ENCODE measurements at regions of chr1 and their contacts with region 1.

Region 1: GRCh38 chr1:27234049-27234882 is at the start of gene WDTC1:
- DNase-seq: peak; percentile 95 to 99 (median 98)
- ATAC-seq: peak; percentile 92
- H3K4me3 ChIP-seq: peak within 1 kb of the TSS; percentile 62
- H3K4me3 Mint-ChIP-seq: peak within 1 kb of the TSS; percentile 100
- H3K27ac ChIP-seq: peak within 1 kb of the TSS; percentile 70 to 73
- H3K27ac Mint-ChIP-seq: peak within 1 kb of the TSS; percentile 99
- H3K4me1 ChIP-seq: peaks cover 29% of the 10 kb centered on the region
- H3K4me1 Mint-ChIP-seq: peaks cover 38% of the 10 kb centered on the region
- H3K27me3 ChIP-seq: no peaks in the 10 kb centered on the region
- H3K27me3 Mint-ChIP-seq: peaks cover 4% of the 10 kb centered on the region
- CTCF ChIP-seq: no peak
- total RNA-seq, gene WDTC1: 17.7 to 18.6 TPM

Region 2: DNA sequence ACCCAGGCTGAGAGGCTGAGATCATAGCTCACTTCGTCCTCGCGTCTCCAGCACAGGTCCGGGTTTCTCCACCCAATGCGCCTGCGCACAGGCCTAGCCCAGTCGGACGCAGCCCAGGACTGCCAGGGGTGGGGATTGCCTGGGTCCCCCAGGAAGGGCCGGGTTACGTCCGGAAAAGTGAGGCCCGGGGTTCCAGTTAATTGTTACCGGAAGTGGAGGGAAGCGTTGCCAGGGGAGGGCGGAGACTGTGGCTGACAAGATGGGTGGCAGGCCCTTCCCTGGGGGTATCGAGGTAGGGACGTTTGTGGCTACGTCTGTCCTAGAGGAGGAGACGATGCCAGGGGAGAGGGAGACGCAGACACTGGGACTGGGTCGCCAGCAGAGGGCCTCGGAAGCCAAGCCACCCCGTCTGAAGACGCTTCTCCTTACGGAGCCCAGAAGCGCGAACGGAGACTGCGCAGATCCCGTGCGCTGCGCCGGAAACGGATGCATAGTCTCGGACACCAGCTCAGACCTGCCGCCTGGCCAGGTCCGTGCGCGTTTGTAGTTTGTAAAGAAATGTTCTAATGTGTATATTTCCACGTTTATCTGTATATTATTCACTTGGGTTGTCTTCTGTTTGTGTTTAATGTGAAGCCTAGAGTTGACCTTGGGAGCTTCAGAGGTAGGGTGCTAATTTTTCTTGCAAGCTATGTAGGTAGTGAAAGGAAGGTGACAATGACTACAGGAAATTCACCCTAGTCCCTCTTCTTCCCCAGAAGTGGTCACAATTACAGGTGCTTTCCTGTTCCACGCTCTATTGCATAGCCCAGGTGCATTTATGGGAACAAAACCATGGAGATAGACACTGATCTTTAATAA is 1994.4 kb before region 1 on chr1:
- CTCF ChIA-PET with region 1: no interaction called
- POLR2A ChIA-PET with region 1: no interaction called
- intact Hi-C with region 1: loop called in 1 of 2 experiments (anchors 10 kb)
- DNase-seq: peak; percentile 64 to 94 (median 78)
- ATAC-seq: peak; percentile 86
- H3K4me3 ChIP-seq: peak overlapping the region; percentile 61
- H3K4me3 Mint-ChIP-seq: peak overlapping the region; percentile 90
- H3K27ac ChIP-seq: peak overlapping the region; percentile 79 to 89
- H3K27ac Mint-ChIP-seq: peak overlapping the region; percentile 99
- H3K4me1 ChIP-seq: peaks cover 38% of the 10 kb centered on the region
- H3K4me1 Mint-ChIP-seq: peaks cover 62% of the 10 kb centered on the region
- H3K27me3 ChIP-seq: no peaks in the 10 kb centered on the region
- H3K27me3 Mint-ChIP-seq: no peaks in the 10 kb centered on the region
- CTCF ChIP-seq: peak; percentile 69

Region 3: DNA sequence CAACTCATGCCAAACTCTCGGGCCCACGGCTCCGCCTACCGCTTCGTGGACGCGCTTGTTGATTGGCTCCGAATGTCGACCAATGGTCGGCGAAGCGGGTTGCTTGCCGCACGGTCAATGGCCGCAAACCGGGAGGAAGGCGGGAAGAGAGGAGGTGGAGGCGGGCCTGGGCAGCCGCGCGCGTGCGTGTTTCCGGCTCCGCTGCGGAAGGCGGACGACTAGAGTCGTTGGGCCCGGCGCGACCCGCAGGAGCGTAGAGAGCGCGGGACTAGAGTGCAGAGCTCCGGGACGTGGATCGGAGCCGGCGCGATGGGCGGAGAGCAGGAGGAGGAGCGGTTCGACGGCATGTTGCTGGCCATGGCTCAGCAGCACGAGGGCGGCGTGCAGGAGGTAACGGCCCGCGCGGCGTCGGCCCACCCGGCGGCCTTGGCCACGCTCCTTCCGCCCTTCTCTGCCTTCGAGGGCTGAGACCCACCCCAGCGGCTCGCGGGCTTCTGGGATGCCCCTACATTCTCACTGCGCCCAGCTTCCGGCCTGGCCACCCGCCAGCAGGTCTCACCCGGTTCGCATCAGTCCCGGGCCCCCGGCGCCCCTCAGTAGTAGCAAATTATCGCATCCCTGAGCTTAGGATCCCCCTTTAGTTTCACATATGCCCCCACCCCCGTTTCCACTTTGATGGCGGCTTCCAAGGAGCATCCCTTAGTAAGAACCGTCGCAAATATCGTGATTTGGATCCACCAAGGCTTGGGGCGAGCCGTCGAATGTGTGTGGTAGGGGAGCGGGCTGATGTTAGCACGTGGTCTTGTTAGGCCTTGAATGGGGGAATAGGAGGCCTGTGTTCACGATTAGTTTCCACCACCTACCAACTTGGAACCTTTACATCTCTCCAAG is 312.5 kb before region 1 on chr1 and contains the start of gene NUDC:
- CTCF ChIA-PET with region 1: no interaction called
- POLR2A ChIA-PET with region 1: no interaction called
- intact Hi-C with region 1: loop called in 1 of 2 experiments (anchors 5 kb)
- DNase-seq: peak; percentile 91 to 98 (median 93)
- ATAC-seq: peak; percentile 94
- H3K4me3 ChIP-seq: peak within 1 kb of the TSS; percentile 74
- H3K4me3 Mint-ChIP-seq: peak within 1 kb of the TSS; percentile 91
- H3K27ac ChIP-seq: peak within 1 kb of the TSS; percentile 83 to 85
- H3K27ac Mint-ChIP-seq: peak within 1 kb of the TSS; percentile 90
- H3K4me1 ChIP-seq: peaks cover 28% of the 10 kb centered on the region
- H3K4me1 Mint-ChIP-seq: peaks cover 37% of the 10 kb centered on the region
- H3K27me3 ChIP-seq: no peaks in the 10 kb centered on the region
- H3K27me3 Mint-ChIP-seq: no peaks in the 10 kb centered on the region
- CTCF ChIP-seq: no peak
- total RNA-seq, gene NUDC: 43.0 to 44.6 TPM

Region 4: DNA sequence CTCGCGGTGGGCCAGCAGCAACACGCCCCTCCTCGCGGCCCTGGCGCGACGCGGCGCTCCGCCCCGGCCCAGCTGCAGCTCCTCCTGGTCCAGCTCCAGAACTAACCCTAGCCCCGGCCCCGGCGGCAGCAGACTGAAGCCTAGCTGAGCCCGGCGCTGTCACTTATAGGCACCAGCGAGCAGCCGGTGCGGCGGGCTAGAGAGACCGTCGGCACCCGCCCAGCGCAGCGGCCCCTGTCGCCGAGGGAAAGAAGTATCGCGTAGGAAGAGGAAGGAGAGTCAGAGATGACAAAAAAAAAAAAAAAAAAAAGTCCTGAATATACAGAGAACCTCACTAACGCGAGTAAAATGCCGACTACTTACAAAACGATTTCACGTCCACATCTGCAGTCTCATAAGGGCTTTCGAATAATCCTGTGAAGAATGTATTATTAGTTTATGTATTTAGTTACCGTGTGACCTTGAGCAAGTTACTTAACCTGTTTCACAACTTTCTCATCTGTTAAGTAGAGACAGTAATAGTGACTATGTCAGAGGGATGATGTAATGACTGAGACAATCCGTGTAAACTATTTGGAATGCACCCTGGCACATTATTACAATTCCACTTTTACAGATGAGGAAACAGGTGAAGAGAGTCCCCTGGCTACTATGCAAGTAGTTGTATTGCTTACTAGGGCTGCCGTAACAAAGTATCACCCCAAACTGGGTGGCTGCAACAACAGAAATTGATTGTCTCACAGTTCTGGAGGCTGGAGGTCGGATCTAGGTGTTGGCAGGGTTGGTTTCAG is 79.1 kb before region 1 on chr1 and contains the start of gene SLC9A1:
- CTCF ChIA-PET with region 1: interaction called, 5 read pairs
- POLR2A ChIA-PET with region 1: interaction called, 11 read pairs
- intact Hi-C with region 1: loop called (anchors 1 to 5 kb)
- DNase-seq: peak; percentile 86 to 97 (median 92)
- ATAC-seq: peak; percentile 93
- H3K4me3 ChIP-seq: peak within 1 kb of the TSS; percentile 93
- H3K4me3 Mint-ChIP-seq: peak within 1 kb of the TSS; percentile 89
- H3K27ac ChIP-seq: peak within 1 kb of the TSS; percentile 84 to 87
- H3K27ac Mint-ChIP-seq: peak within 1 kb of the TSS; percentile 98
- H3K4me1 ChIP-seq: peaks cover 48% of the 10 kb centered on the region
- H3K4me1 Mint-ChIP-seq: peaks cover 47% of the 10 kb centered on the region
- H3K27me3 ChIP-seq: no peaks in the 10 kb centered on the region
- H3K27me3 Mint-ChIP-seq: no peaks in the 10 kb centered on the region
- CTCF ChIP-seq: peak; percentile 80
- total RNA-seq, gene SLC9A1: 14.2 to 19.0 TPM

Region 5: GRCh38 chr1:27275696-27276095 is 41.4 kb after region 1 on chr1:
- CTCF ChIA-PET with region 1: no interaction called
- POLR2A ChIA-PET with region 1: no interaction called
- intact Hi-C with region 1: no loop called
- DNase-seq: no peak
- ATAC-seq: no peak
- H3K4me3 ChIP-seq: no peak overlapping the region
- H3K4me3 Mint-ChIP-seq: no peak overlapping the region
- H3K27ac ChIP-seq: no peak overlapping the region
- H3K27ac Mint-ChIP-seq: no peak overlapping the region
- H3K4me1 ChIP-seq: no peaks in the 10 kb centered on the region
- H3K4me1 Mint-ChIP-seq: peaks cover 7% of the 10 kb centered on the region
- H3K27me3 ChIP-seq: no peaks in the 10 kb centered on the region
- H3K27me3 Mint-ChIP-seq: no peaks in the 10 kb centered on the region
- CTCF ChIP-seq: no peak

Region 6: GRCh38 chr1:27290581-27290980 is 56.3 kb after region 1 on chr1:
- CTCF ChIA-PET with region 1: no interaction called
- POLR2A ChIA-PET with region 1: no interaction called
- intact Hi-C with region 1: no loop called
- DNase-seq: no peak
- ATAC-seq: no peak
- H3K4me3 ChIP-seq: no peak overlapping the region
- H3K4me3 Mint-ChIP-seq: no peak overlapping the region
- H3K27ac ChIP-seq: no peak overlapping the region
- H3K27ac Mint-ChIP-seq: no peak overlapping the region
- H3K4me1 ChIP-seq: no peaks in the 10 kb centered on the region
- H3K4me1 Mint-ChIP-seq: no peaks in the 10 kb centered on the region
- H3K27me3 ChIP-seq: no peaks in the 10 kb centered on the region
- H3K27me3 Mint-ChIP-seq: no peaks in the 10 kb centered on the region
- CTCF ChIP-seq: no peak

Region 7: DNA sequence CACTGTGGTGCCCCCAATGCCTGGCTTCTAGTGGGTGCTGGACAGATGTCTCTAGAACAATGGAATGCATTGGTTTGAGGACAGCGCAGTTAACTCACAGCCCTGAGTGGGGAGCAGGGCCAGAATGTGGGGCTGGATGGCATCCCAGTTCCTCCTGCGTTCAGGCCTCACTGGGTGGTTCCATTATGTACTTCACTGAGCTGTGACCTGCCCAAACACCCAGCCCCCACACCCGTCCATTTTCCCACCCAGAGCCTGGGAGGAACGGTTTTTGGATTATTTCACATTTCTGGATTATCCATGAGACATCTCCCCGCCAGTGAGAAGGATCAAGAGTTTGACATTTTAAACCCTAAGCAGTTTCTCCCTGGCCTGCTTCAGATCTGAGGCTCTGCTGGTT is 311.0 kb after region 1 on chr1:
- CTCF ChIA-PET with region 1: no interaction called
- POLR2A ChIA-PET with region 1: no interaction called
- intact Hi-C with region 1: no loop called
- DNase-seq: no peak
- ATAC-seq: no peak
- H3K4me3 ChIP-seq: no peak overlapping the region
- H3K4me3 Mint-ChIP-seq: no peak overlapping the region
- H3K27ac ChIP-seq: no peak overlapping the region
- H3K27ac Mint-ChIP-seq: no peak overlapping the region
- H3K4me1 ChIP-seq: no peaks in the 10 kb centered on the region
- H3K4me1 Mint-ChIP-seq: peaks cover 5% of the 10 kb centered on the region
- H3K27me3 ChIP-seq: no peaks in the 10 kb centered on the region
- H3K27me3 Mint-ChIP-seq: no peaks in the 10 kb centered on the region
- CTCF ChIP-seq: no peak

Region 8: DNA sequence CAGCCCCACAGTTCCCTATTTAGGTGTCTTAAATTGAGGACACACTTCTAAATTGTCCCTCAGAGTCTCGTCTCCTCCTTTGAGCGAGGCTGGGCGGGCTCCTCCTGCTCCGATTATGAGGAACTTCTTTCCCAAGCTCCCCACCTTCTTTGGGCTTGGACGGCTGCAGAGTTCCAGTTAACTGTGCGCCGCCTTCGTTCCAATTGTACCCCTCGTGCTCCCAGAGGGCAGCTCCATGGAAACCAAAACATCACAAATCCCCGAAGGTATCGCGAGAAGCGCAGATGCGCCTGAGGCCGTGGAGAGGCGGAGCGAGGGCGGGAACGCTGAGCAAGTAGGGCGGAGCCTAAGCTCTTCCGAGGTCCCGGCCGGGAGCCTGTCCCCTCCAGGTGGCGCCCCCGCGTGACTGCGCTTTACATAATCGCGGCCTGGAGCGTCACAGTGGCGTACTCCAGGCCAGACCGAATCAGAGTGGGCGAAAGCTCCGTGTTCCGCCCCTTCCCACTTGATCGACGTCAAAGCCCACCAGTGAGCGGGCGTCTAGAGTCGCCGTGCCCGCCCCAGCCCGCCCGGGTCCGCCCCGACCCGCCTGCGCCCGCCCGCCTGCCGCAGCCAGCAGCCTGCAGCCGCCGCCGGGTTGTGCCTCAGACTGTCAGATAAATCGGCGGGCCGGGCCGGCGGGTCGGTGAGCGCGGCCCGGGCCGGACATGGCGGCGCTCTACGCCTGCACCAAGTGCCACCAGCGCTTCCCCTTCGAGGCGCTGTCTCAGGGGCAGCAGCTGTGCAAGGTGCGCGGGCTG is 491.3 kb after region 1 on chr1 and contains the start of gene FAM76A:
- CTCF ChIA-PET with region 1: no interaction called
- POLR2A ChIA-PET with region 1: interaction called, 6 read pairs
- intact Hi-C with region 1: loop called in 1 of 2 experiments (anchors 5 kb)
- DNase-seq: peak; percentile 99 to 100 (median 99)
- ATAC-seq: peak; percentile 92
- H3K4me3 ChIP-seq: peak within 1 kb of the TSS; percentile 74
- H3K4me3 Mint-ChIP-seq: peak within 1 kb of the TSS; percentile 85
- H3K27ac ChIP-seq: peak within 1 kb of the TSS; percentile 82 to 85
- H3K27ac Mint-ChIP-seq: peak within 1 kb of the TSS; percentile 89
- H3K4me1 ChIP-seq: peaks cover 19% of the 10 kb centered on the region
- H3K4me1 Mint-ChIP-seq: peaks cover 24% of the 10 kb centered on the region
- H3K27me3 ChIP-seq: no peaks in the 10 kb centered on the region
- H3K27me3 Mint-ChIP-seq: no peaks in the 10 kb centered on the region
- CTCF ChIP-seq: peak; percentile 60
- total RNA-seq, gene FAM76A: 26.0 to 28.7 TPM

Measured in CD4-positive, alpha-beta T cell (primary cell).